Sigmoid colon (tissue), 7 donors: ENCODE measurements at regions of chr10 and their contacts with region 1.

Region 1: DNA sequence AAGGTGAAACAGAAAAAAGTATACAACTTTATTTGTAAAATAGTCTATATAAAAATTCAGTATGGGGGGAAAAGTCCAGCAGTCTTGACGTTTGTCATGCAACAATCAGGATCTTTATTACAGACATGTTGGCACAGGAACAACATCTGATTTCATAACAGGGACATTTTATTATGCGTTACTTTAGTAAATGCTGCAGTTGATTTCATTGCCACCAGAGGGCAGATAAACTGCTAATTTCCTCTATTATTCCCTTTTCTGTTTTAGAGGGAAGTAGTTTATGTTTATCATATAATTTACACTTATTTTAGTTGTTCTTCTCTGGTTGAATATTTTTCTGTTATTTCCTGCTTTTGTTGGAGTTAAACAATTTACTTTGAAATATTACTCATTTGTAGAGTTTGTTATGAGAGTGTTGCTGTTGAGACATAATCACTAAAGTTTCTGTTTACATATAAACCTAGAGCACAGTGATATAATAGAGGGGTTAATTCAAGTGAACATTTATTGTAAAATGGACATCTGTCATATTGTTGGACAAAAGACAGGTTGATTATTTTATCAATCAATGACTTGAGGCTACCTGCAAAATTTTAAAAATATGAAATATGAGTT is 3.3 kb downstream of the PLXDC2 start:
- DNase-seq: no peak
- H3K4me3 ChIP-seq: peak overlapping the region in 3 of 4 donors; percentile 49 to 87 (median 87)
- H3K27ac ChIP-seq: peak overlapping the region in 3 of 4 donors; percentile 18 to 89 (median 36)
- H3K4me1 ChIP-seq: peaks cover 0 to 30% (median 18%) of the 10 kb centered on the region in 4 donors
- H3K27me3 ChIP-seq: peaks cover 0 to 35% (median 0%) of the 10 kb centered on the region in 3 donors
- CTCF ChIP-seq: peak; percentile 34 to 74 (median 64)
- EP300 ChIP-seq: no peak
- POLR2A ChIP-seq: no peak

Region 2: DNA sequence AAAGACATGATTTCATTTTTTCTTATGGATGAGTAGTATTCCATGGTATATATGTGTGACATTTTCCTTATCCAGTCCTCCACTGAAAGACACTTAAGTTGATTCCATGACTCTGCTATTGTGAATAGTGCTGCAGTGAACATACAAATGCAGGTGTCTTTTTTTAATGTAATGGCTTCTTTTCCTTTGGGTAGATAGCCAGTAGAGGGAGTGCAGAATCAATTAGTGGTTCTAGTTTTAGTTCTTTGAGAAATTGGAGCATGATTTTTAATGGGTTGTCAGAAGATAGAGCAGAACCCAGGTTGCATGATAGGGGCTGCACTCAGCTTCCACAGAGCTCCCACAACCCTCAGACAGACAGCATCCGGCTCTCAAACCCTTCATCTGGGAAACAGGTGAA is 156.2 kb before region 1 on chr10:
- intact Hi-C with region 1: no loop called
- DNase-seq: no peak
- H3K4me3 ChIP-seq: no peak overlapping the region
- H3K27ac ChIP-seq: no peak overlapping the region
- H3K4me1 ChIP-seq: no peaks in the 10 kb centered on the region
- H3K27me3 ChIP-seq: no peaks in the 10 kb centered on the region
- CTCF ChIP-seq: no peak
- EP300 ChIP-seq: no peak
- POLR2A ChIP-seq: no peak

Region 3: DNA sequence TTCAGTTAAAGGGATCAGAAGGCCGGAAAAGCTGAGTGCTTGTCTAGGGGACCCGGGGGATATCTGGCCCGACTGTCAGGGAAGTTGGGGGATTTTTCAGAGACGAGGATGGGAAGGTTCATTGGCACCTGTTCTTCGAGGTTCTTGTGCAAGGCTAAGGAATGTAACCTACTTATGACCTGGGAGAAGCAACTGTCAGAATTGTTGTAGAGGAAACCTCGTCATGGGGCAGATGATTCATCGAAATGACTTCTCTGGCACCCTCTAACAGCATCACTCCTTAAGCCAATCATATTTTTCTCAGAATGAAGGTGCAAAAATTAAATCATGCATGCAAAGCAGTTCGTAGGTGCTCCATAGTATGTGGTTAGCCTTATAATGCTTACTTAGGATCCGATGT is 55.2 kb after region 1 on chr10:
- intact Hi-C with region 1: no loop called
- DNase-seq: no peak
- H3K4me3 ChIP-seq: no peak overlapping the region
- H3K27ac ChIP-seq: no peak overlapping the region
- H3K4me1 ChIP-seq: no peaks in the 10 kb centered on the region
- H3K27me3 ChIP-seq: no peaks in the 10 kb centered on the region
- CTCF ChIP-seq: no peak
- EP300 ChIP-seq: no peak
- POLR2A ChIP-seq: no peak

Region 4: GRCh38 chr10:19922236-19922963 is 102.9 kb after region 1 on chr10:
- intact Hi-C with region 1: loop called (anchors 5 kb)
- DNase-seq: no peak
- H3K4me3 ChIP-seq: no peak overlapping the region
- H3K27ac ChIP-seq: peak overlapping the region; percentile 61 to 82 (median 68)
- H3K4me1 ChIP-seq: peaks cover 0 to 57% (median 45%) of the 10 kb centered on the region in 4 donors
- H3K27me3 ChIP-seq: no peaks in the 10 kb centered on the region
- CTCF ChIP-seq: no peak
- EP300 ChIP-seq: no peak
- POLR2A ChIP-seq: no peak

Region 5: DNA sequence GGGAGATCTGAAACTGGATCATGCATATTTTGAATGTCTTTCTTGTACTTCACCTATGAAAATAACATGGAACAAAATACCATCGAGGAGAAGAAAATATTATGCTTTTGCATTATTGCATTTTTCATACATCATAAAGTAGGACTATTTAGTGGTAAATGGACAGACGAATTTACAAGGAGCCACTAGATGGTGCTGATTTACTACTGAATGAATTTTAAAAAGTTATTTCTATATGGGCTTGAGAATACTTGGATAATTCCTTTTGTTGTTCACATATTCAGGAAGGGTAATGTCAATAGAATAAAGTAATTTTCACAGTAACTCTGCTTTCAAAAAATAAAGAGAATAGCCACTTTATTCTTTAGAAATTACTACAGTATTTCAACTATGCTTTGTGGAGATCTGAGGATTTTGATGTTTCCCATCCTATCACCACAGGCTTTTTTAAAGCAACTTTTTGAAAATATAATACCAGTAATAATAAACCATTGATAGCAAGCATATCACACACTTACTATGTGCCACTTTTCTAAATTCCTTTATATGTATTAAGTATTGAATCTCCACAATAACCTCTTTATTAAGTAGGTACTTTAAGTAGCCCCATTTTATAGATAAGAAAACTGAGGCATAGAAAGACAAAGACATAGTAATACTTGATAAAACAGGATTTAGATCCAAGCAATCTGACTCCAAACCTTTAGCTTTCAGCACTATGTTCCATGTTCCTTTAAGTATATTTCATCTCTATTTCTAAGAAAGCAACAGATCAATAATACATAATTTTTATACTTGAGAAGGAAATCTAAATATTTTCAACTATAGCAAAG is 1039.0 kb after region 1 on chr10:
- intact Hi-C with region 1: loop called (anchors 10 kb)
- DNase-seq: no peak
- H3K4me3 ChIP-seq: no peak overlapping the region
- H3K27ac ChIP-seq: no peak overlapping the region
- H3K4me1 ChIP-seq: no peaks in the 10 kb centered on the region
- H3K27me3 ChIP-seq: no peaks in the 10 kb centered on the region
- CTCF ChIP-seq: peak in 2 of 4 experiments; percentile 10 to 40
- EP300 ChIP-seq: no peak
- POLR2A ChIP-seq: no peak